GM13977 (cell line): ENCODE measurements at regions of chr6 and their contacts with region 1.

Region 1: DNA sequence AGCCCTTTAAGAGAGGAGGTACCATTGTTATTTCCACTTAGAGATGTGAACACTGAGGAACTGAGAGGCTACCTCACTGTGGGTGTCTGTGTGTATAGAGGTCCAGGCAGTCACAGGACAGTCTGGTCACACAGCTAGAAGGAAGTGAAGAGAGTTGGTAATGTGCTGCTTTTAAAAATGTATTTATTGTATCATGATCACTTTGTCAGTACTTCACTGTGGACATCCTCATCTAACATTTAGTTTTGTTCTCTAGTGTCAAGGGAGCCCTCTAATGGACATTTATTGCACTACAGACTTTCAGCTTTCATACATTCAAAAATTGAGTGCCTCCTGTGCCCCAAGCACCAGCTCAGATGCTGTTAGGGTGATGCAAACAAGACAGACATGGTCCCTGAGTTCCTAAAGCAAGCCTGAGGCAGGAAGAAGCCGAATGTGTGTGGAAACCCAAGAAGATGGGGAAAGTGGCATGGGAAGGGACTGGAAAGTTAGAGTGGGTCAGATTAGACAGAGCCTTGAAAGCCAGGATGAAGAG is 123.0 kb downstream of the SLC16A10 start:
- DNase-seq: peak; percentile 69
- CTCF ChIP-seq: peak; percentile 71

Region 2: GRCh38 chr6:110512979-110513378 is 697.3 kb before region 1 on chr6:
- in situ Hi-C with region 1: loop called (anchors 25 kb)
- DNase-seq: no peak
- CTCF ChIP-seq: no peak

Region 3: GRCh38 chr6:111011360-111012142 is 198.7 kb before region 1 on chr6:
- in situ Hi-C with region 1: no loop called
- DNase-seq: peak; percentile 65
- CTCF ChIP-seq: peak; percentile 68

Region 4: DNA sequence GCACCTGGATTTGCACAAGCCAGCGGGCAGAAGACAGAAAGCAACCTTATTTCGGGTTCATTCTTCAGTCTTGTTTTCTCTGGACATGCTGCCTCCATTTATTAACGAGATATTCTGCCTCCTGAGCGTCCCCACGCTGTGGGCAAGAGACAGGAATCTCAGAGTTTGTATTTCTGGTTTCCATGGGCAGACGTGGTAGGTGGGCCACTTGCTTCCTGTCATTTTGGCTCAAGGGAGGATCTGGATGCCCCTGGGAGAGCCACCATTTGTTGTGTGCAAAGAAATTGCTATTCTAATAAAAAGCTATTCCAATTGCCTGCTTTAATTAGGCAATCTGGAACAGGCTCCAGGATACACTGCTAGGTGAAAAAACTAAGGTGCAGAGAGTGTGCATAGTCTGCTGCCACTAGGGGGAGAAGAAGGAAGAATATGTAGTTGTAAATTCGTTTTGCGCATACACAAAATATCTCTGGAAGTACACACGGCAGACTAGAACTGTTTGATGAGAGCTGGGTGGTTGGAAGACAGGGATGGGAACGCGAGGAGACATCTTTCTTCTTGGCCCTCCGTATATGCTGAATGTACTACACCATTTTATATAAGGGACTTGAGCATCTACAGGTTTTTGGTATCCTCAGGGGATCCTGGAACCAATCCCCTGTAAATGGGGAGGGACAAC is 153.0 kb before region 1 on chr6:
- in situ Hi-C with region 1: loop called (anchors 10 kb)
- DNase-seq: peak; percentile 38
- CTCF ChIP-seq: peak; percentile 67

Region 5: GRCh38 chr6:111462770-111463391 is 252.6 kb after region 1 on chr6:
- in situ Hi-C with region 1: no loop called
- DNase-seq: no peak
- CTCF ChIP-seq: no peak